Left ventricle myocardium superior (tissue), 1 donor: ENCODE measurements at regions of chr14 and their contacts with region 1.

Region 1: DNA sequence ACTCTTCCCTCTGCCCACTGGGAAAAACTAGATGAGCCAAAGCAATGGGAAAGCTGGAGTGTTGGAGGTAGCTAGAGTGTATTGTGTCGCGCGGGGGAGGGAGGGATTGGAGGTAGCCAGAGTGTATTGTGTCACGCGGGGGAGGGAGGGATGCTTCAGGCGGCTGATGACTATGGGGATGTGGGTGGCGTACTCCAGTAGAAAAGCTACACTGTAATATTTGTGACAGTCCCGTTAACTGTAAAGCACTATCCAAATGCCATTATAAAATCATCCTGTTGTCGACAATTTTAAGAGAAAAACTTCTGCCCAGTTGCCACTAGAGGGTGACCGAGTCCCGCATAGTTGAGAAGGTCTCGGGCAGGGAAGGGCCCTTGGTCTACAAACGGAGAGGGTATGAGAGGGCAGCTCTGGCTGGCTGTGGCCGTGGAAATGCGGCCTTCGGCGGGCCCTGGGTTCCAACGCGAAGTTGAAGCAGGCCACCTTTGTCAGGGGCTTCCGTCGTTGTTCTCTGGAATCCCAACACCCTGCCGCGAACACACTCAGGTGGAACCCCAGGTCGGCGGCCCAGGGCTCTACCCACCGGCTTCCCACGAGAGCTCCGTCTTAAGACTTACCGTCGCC is 15.1 kb upstream of the PLEK2 start:
- DNase-seq: peak; percentile 74
- ATAC-seq: peak; percentile 93

Region 2: GRCh38 chr14:67068251-67068650 is 358.8 kb before region 1 on chr14:
- intact Hi-C with region 1: no loop called
- DNase-seq: no peak
- ATAC-seq: no peak

Region 3: DNA sequence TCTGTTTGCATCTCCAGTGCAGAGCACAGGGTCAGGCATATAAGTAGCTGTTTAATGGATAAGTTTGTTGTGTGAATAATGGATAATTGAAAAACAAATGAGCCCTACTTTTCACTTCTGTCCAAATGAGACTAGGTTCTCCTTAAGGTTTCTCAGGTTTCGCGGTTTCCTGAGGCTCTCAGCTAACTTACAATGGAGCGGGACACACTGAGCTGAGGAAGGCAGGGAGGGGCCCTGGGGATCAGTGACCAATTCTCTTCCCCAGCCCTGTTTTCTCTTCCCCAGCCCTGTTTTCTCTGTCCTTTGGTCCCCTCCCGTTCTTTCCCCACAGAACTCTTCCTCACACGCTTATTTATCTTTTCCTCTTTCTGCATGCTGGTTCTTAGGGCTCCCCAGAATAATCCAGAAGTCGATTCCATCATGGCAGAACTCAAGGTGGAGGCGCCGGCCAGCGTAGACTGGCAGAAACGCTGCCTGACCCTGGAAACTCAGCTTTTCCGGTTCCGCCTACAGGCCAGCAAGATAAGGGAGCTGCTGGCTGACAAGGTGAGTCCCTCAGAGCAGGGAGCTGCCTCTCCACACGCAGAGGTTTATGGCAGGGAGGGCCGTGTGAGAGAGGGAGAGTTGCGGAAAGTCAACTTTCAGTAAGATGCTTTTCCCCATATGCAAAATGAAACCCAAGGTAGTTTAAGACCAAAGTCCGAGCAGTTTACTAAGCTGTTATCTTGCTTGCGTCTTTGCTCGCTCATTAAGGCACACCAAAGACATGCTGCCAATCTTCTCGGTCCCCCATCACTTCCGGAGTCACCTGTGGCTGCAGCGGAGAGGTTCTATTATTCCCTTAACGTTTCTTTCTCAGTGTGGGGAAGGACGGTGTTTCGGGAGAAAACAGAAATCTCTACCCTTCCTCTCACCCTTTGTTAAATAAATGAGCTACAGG is 114.6 kb after region 1 on chr14:
- intact Hi-C with region 1: no loop called
- DNase-seq: no peak
- ATAC-seq: no peak

Region 4: GRCh38 chr14:67571272-67571850 is 144.3 kb after region 1 on chr14:
- intact Hi-C with region 1: loop called (anchors 2 kb)
- DNase-seq: peak; percentile 74
- ATAC-seq: peak; percentile 85